ENCODE measurements at regions of chr6 and their contacts with region 1.

Region 1: DNA sequence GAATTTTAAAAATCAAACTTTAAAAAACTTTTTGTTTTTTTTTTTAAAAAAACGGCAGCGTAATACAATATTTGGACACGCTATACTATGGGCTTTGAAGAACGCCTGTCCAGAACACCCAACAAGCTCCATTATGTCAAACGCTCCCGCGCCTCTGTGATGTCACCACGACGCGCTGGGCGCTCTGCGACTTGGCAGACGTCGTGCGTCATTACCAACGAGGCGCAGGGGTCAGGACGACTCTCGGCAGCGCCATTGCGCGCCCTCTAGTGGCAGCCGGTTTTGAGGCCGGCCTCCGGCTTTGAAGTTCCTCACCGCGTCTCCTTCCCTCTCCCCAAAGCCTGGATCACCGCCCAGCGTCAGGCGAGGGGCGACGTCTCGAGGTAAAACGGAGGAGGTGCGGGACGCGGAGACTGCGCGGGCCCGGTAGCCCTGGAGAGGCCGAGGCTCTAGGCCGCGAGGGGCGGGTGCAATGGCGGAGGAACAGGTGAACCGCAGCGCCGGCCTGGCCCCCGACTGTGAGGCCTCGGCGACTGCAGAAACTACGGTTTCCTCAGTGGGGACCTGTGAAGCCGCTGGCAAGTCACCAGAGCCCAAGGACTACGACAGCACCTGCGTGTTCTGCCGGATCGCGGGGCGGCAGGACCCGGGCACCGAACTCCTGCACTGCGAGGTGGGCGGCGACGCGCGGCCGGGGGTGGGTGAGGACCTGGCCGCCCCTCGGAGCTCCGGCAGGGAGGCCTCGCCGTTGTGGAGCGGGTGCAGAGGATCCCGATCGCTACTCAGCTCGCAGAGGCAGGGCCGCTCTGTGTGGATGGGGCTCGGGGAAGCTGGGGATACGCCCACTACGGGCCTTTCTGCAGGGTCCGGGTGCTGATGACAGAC is at the start of gene HINT3:
- DNase-seq: peak; percentile 99 to 100
- ATAC-seq: peak; percentile 98
- H3K4me3 ChIP-seq: peak within 1 kb of the TSS; percentile 69 to 84
- H3K27ac ChIP-seq: peak within 1 kb of the TSS; percentile 73 to 85
- H3K4me1 ChIP-seq: peaks cover 3 to 7% of the 10 kb centered on the region in 2 donors
- H3K27me3 ChIP-seq: no peaks in the 10 kb centered on the region
- total RNA-seq, gene HINT3: 16.2 to 20.1 TPM

Region 2: DNA sequence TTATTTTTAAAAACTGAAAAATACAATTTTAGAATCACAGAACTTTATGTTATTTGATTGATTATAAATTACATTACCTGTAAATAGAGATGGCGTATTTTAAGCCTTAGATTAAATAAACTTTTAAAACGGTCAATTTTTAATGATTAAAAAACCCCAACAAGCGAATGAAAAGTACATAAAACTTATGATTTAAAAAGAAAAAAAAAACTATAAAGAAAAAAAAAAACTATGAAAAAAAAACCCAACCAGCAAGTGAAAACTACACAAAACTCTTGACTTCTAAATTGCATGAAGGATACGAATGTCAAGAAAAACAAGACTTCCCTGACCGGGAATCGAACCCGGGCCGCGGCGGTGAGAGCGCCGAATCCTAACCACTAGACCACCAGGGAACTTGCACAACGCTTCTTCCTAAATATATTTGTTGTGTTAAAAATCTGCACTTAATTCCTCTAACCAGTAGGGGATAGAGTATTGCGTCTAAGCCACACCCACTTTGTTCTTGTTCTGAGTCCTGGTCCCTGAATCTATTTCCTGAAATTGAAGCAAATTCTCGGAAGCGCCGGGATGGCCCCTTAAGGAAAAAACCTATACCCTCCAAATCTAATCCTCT is 176.7 kb before region 1 on chr6:
- intact Hi-C with region 1: loop called (anchors 2 to 5 kb)
- DNase-seq: peak; percentile 87 to 95
- ATAC-seq: peak; percentile 98
- H3K4me3 ChIP-seq: peak overlapping the region; percentile 84 to 93
- H3K27ac ChIP-seq: peak overlapping the region in 1 of 2 donors; percentile 88
- H3K4me1 ChIP-seq: no peaks in the 10 kb centered on the region
- H3K27me3 ChIP-seq: no peaks in the 10 kb centered on the region

Region 3: DNA sequence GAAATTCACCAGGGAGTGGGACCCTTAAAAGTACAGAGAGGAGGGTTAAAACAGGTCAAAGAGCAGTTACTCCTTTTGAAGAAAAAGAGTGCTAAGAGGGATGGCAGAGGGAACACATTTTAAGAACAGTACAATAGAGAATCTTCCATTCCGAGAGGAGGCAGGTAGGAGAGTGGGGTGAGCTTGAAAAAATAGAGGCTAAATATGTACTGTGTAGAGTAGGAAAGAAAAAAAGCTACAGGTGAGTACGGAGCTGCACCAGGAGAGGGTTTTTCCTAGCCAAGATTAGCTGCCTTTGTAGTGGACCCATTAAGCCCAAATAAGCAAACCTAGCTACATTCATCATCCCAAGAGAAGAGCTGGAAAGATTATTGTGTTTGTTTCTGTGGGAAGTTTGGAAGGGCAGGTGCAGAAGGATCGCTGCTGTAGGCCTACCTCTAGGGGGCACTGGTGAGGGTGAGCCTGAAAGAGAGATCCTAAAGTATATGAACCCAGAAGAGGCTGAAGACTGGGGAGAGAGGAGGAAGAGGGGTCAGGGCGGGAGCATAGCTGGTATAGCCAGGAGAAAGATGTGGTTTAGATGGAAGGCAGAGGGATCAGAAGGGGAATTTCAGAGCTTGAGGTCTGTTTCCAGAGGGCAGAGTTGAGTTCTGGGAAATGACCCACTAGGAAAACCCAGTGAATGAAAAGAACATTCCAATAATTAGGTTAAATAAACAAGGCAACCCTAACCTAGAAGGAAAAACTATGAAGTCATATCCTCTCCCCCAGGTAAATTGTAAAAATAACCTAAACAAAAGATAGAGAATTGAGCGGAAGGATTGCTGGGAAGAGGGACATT is 50.4 kb before region 1 on chr6:
- intact Hi-C with region 1: loop called in 1 of 2 experiments (anchors 5 kb)
- DNase-seq: peak in 1 of 2 donors; percentile 57
- ATAC-seq: no peak
- H3K4me3 ChIP-seq: no peak overlapping the region
- H3K27ac ChIP-seq: no peak overlapping the region
- H3K4me1 ChIP-seq: no peaks in the 10 kb centered on the region
- H3K27me3 ChIP-seq: no peaks in the 10 kb centered on the region

Region 4: GRCh38 chr6:125918681-125919566 is 37.8 kb before region 1 on chr6:
- intact Hi-C with region 1: loop called in 1 of 2 experiments (anchors 5 kb)
- DNase-seq: peak in 1 of 2 donors; percentile 47
- ATAC-seq: peak; percentile 86
- H3K4me3 ChIP-seq: peak overlapping the region; percentile 48 to 51
- H3K27ac ChIP-seq: peak overlapping the region in 1 of 2 donors; percentile 12
- H3K4me1 ChIP-seq: peaks cover 0 to 3% of the 10 kb centered on the region in 2 donors
- H3K27me3 ChIP-seq: no peaks in the 10 kb centered on the region

Region 5: DNA sequence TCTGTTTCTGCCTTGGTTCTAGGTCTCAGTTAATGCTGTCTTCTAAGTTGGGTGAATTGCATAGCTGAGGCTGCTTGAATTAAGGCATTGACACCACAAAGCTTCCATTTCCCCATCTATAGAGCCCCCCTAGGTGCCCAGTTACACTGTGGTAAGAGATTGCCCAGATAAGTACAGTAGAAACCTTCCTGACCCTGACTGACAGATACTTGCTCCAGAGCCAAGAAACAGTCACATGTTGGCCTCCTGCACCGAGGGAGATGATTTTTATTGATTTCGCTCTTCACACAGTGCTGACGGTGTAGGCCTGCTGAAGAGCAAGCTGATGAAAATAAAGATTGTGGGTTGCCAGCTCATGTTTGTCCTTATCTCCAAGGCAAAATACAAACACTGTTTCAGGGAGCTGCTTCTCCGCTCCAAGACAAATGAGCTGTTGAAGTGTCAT is 97.5 kb after region 1 on chr6:
- intact Hi-C with region 1: no loop called
- DNase-seq: no peak
- ATAC-seq: peak; percentile 29
- H3K4me3 ChIP-seq: no peak overlapping the region
- H3K27ac ChIP-seq: no peak overlapping the region
- H3K4me1 ChIP-seq: no peaks in the 10 kb centered on the region
- H3K27me3 ChIP-seq: no peaks in the 10 kb centered on the region